Motor neuron (in vitro differentiated cells): ENCODE measurements at regions of chr16 and their contacts with region 1.

Region 1: GRCh38 chr16:73196670-73197069 is 148.7 kb upstream of the ZFHX3 start:
- ATAC-seq: peak in 4 of 8 experiments; percentile 23 to 95 (median 92)
- H3K4me3 ChIP-seq: no peak overlapping the region
- H3K27ac ChIP-seq: no peak overlapping the region
- H3K4me1 ChIP-seq: peaks cover 9 to 14% of the 10 kb centered on the region in 2 donors

Region 2: DNA sequence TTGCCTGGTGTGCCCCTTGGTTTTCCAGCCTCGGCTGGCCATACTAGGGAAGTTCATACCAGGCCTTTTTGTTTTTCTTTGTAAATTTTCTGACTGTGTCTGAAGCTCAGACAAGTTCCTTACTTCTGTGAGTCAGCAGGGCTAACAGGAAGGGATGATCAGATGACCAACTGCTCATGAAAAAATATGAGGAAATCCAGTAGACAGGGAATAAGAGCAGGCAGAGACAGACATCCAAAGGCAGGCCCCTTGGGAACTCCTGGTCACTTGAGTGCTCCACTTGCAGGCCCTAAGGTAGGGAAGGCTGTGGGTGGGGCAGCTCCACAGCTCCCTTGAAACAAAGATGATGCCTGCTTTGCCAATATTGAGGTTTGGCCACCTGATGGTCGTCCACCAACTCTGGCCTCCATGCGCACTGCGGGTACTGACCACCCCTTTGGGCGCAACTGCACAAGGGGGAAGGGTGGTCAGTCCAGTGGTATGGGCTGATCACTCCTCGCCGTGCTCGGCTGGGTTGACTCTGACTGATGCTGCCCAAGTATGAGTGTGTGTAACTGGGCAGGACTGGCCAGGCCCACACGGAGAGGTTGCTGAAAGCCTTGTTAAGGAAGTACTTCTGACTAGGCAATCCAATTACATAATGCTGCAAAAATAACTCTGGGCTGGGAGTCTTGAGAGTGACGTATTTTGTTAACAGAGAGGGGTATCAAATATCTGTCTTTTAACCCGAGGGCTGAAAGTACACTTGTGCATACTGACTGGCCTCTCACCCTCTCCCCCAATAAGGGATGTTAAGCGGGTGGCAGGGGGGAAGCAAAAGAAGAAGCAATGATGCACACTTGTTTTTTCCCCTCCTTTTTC is 127.9 kb before region 1 on chr16:
- in situ Hi-C with region 1: loop called in 1 of 9 experiments (anchors 10 kb)
- ATAC-seq: peak; percentile 8 to 83 (median 37)
- H3K4me3 ChIP-seq: no peak overlapping the region
- H3K27ac ChIP-seq: no peak overlapping the region
- H3K4me1 ChIP-seq: peaks cover 52 to 56% of the 10 kb centered on the region in 2 donors